Brain microvascular endothelial cell (primary cell): ENCODE measurements at regions of chr2 and their contacts with region 1.

Region 1: GRCh38 chr2:64062829-64063228 is 43.6 kb upstream of the VPS54 start:
- DNase-seq: peak; percentile 60
- H3K4me3 ChIP-seq: no peak overlapping the region
- H3K27ac ChIP-seq: peak overlapping the region; percentile 2
- H3K27me3 ChIP-seq: no peaks in the 10 kb centered on the region
- CTCF ChIP-seq: no peak

Region 2: DNA sequence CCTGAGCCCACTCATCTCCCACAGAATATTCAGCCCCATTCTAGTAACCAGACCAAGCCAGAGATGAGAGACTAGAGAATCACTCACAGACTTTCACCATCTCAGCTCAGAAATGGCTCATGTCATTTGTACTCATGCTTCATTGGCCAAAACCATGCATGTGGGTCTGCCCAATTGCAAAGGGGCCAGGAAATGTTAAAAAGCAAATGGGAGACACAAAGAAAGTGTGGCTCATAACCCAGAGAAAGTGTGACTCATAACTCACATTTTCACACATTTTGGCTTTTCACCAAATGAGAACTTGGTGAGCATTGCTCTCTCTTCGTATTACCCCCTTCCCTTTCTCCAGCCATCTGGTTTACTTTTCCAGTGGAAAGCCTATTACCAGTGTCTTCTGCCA is 407.9 kb before region 1 on chr2:
- in situ Hi-C with region 1: no loop called
- DNase-seq: no peak
- H3K4me3 ChIP-seq: no peak overlapping the region
- H3K27ac ChIP-seq: no peak overlapping the region
- H3K27me3 ChIP-seq: no peaks in the 10 kb centered on the region
- CTCF ChIP-seq: no peak

Region 3: GRCh38 chr2:64179582-64180321 is 116.9 kb after region 1 on chr2:
- in situ Hi-C with region 1: no loop called
- DNase-seq: no peak
- H3K4me3 ChIP-seq: no peak overlapping the region
- H3K27ac ChIP-seq: no peak overlapping the region
- H3K27me3 ChIP-seq: no peaks in the 10 kb centered on the region
- CTCF ChIP-seq: no peak

Region 4: DNA sequence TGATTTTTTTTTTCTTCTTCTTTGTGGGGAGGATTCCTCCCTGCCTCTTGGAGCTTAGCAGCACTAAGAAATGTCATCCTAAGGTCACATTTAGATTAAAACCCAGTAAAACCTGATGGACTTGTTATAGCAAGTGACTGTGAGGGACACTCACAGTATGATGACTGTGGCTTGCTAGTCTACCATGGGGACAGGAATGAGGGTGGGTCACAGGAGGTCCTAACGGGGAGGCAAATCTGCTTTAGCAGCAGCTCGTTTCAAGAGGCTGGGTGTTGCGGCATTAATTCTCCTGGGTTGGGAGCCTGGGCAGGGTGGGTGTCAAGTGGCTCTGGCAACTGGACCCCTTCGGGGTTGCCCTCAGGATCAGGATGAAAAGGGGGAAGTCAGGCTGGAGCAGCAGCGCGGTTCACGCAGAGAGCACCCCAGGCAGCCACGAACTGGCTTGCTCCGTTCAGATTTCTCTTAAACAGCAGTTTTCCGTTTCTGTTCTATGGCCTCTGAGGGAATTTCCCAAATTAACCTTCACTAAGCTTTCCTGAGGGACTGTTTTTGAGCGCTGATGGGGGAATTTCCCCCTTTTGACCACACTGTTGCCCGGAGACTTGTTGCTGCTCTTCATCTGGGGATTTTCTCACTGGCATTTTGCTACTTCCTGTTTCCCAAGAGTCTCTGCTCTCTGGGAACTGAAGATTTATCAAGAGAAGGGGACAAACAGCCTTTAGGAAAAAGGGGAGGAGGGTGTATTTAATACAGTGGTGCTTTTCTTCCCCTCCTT is 141.2 kb after region 1 on chr2:
- in situ Hi-C with region 1: loop called (anchors 25 kb)
- DNase-seq: peak; percentile 59
- H3K4me3 ChIP-seq: no peak overlapping the region
- H3K27ac ChIP-seq: peak overlapping the region; percentile 81
- H3K27me3 ChIP-seq: no peaks in the 10 kb centered on the region
- CTCF ChIP-seq: no peak

Region 5: GRCh38 chr2:64488050-64488974 is 425.5 kb after region 1 on chr2:
- in situ Hi-C with region 1: loop called (anchors 25 kb)
- DNase-seq: peak; percentile 33
- H3K4me3 ChIP-seq: no peak overlapping the region
- H3K27ac ChIP-seq: no peak overlapping the region
- H3K27me3 ChIP-seq: peaks cover 14% of the 10 kb centered on the region
- CTCF ChIP-seq: peak; percentile 95